Activated T-helper 2 cell treated with anti-CD3 and anti-CD28 coated beads, Interferon-gamma antibody, Interleukin-2, Interleukin-4, amounts not matched to agents 10 μg/mL and 5 μg/mL and 100 μg/mL, durations not matched to agents 14 hours and 24 hours and 36 hours (primary cell): ENCODE measurements at regions of chrX and their contacts with region 1.

Region 1: DNA sequence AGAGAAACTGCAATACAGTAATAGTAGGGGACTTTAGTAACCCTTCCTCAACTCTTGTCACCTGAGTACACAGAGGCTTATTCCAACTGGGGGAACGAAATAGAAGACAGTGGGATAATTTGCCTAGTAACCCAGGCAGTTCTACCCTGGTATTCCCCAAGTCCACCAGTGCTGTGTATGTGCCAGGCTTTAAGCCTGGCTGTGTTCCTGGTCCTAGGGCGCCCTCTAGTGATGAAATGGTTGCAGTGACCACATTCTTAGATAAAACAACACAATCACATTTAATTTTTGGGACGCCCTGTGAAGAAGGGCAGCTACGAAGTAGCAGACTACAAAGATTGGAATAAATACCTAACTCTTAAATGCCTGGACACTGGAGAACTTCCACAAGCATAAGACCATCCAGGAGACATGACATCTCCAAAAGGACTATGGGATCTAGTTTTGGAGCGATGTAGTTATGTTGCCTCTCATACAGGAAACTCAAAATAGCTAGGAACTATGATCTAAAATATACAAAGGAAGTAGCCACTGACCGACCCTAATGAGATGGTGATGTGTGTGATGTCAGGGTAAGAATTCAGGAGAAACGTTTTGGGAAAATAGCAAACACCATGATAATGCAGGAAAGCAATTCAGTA is 288.5 kb upstream of the ZCCHC13 start:
- DNase-seq: peak; percentile 28
- H3K4me3 Mint-ChIP-seq: no peak overlapping the region
- H3K27ac Mint-ChIP-seq: no peak overlapping the region
- H3K4me1 Mint-ChIP-seq: peaks cover 9% of the 10 kb centered on the region
- H3K27me3 Mint-ChIP-seq: no peaks in the 10 kb centered on the region

Region 2: DNA sequence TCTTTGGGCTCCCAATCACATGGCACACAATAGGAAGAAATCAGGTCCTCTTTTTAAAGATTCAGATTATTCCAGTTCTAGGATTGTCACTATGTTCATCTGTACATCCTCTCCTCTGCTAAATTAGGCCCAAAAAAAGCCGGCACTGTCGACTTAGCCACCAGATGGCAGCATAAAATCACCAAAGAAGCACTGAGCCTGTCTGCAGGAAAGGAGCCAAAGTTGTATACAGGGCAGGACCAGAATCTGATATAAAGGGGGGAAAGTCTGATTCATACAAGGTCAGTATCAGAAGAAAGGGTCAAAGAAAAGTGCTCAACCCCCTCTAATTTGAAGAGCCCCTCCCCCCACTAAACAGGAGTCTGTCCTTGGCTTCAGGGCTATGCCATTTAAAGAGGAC is 160.0 kb before region 1 on chrX:
- intact Hi-C with region 1: loop called (anchors 1 kb)
- DNase-seq: peak; percentile 18
- H3K4me3 Mint-ChIP-seq: no peak overlapping the region
- H3K27ac Mint-ChIP-seq: no peak overlapping the region
- H3K4me1 Mint-ChIP-seq: no peaks in the 10 kb centered on the region
- H3K27me3 Mint-ChIP-seq: no peaks in the 10 kb centered on the region

Region 3: DNA sequence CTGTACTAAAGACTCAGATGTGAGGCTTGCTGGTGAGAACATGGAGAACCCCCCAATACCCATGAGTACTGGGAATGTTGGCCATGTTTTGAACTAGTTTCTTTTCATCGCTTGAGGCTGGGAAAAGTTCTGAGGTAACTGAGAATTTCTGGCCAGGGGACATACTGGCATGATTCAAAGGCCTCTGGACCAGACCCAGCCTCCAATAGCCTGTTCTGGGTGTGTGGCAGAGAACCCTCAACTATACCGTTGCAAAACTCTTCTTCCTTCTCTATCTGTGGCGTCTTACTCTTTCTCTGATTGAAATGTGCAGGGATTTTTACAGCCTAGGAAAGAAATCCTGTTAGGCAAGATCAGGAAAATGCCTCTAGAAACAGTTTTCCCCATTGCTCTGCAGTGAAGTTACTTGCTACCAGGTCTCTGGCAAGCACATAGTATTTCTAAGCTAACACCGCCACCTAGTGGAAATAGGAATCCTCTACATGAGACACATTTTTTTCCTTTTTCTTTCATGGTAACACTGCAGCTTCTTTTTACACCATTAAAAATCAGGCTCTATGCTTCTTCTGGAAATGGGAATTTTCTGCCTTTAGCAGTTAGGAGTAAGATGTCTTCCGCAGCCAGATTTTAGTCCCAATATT is 117.8 kb after region 1 on chrX:
- intact Hi-C with region 1: loop called (anchors 10 kb)
- DNase-seq: no peak
- H3K4me3 Mint-ChIP-seq: no peak overlapping the region
- H3K27ac Mint-ChIP-seq: no peak overlapping the region
- H3K4me1 Mint-ChIP-seq: no peaks in the 10 kb centered on the region
- H3K27me3 Mint-ChIP-seq: no peaks in the 10 kb centered on the region

Region 4: DNA sequence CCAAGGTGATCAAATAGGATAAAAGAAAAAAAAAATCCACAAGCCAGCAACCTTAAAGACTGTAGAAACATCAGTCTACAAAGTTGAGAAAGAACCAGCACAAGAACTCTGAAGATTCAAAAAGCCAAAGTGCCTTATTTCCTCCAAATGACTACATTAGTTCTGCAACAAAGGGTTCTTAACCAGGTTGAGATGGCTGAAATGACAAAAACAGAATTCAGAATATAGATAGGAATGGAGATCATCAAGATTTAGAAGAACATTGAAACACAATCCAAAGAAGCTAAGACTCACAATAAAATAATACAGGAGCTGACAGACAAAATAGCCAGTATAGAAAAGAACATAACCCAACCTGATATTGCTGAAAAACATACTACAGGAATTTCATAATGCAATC is 131.9 kb after region 1 on chrX:
- intact Hi-C with region 1: no loop called
- DNase-seq: no peak
- H3K4me3 Mint-ChIP-seq: no peak overlapping the region
- H3K27ac Mint-ChIP-seq: no peak overlapping the region
- H3K4me1 Mint-ChIP-seq: no peaks in the 10 kb centered on the region
- H3K27me3 Mint-ChIP-seq: no peaks in the 10 kb centered on the region